Left colon (tissue), 2 donors: ENCODE measurements at regions of chr12 and their contacts with region 1.

Region 1: GRCh38 chr12:96578526-96579125 is 89.2 kb downstream of the CFAP54 start:
- DNase-seq: no peak
- ATAC-seq: peak; percentile 56

Region 2: DNA sequence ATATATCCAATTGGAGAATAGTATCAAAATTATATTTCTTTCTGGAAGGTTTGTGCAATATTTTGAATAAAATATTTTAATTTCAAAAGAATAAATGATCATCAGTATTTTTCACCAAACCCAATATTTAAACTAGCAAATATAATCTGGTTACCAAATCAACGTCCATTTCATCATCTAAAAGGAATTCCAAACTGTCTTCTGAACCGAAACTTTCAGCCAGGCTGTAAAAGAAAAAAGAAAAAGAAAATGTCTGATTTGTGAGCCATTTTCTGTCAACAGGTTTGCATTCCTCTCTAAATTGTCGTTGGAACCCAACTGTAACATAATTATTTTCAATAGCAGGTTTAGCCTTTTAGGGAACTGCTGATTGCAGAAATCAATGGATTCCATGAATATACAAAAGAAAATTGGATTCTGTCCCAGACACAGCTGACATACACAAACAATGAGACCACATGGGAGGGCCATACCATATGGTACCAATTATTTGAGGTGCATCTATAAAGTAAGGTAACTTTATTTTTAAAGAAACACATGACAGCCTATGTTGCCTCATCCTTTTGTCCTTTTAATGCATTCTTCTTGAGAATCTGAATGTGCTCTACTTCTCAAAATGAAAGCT is 697.2 kb before region 1 on chr12:
- intact Hi-C with region 1: no loop called
- DNase-seq: no peak
- ATAC-seq: no peak

Region 3: GRCh38 chr12:96078231-96079135 is 500.1 kb before region 1 on chr12:
- intact Hi-C with region 1: no loop called
- DNase-seq: no peak
- ATAC-seq: no peak

Region 4: DNA sequence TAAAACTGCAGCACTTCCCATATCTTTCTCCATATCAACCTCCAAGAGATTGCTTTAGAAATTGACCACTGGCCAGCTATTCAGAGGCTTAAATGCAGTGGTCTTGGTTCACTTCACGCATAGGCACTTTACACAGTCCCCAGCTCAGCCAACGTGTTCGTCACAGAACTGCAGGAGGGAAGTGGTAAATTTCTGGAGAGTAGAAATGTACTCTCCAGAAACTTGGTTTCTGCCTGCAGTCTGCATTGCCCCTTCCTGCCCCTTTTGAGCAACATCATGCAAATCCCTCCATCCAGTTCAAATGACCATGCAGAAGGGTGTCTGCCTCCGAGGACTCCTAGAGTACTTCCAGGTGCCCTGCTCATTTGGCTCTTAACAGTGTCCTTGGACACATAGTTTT is 285.7 kb after region 1 on chr12:
- intact Hi-C with region 1: no loop called
- DNase-seq: no peak
- ATAC-seq: no peak

Region 5: GRCh38 chr12:96902076-96902475 is 323.4 kb after region 1 on chr12:
- intact Hi-C with region 1: no loop called
- DNase-seq: no peak
- ATAC-seq: no peak

Region 6: GRCh38 chr12:96985480-96986362 is 407.1 kb after region 1 on chr12:
- intact Hi-C with region 1: loop called in 1 of 2 experiments (anchors 10 kb)
- DNase-seq: peak in 1 of 2 donors; percentile 15
- ATAC-seq: peak; percentile 76

Region 7: DNA sequence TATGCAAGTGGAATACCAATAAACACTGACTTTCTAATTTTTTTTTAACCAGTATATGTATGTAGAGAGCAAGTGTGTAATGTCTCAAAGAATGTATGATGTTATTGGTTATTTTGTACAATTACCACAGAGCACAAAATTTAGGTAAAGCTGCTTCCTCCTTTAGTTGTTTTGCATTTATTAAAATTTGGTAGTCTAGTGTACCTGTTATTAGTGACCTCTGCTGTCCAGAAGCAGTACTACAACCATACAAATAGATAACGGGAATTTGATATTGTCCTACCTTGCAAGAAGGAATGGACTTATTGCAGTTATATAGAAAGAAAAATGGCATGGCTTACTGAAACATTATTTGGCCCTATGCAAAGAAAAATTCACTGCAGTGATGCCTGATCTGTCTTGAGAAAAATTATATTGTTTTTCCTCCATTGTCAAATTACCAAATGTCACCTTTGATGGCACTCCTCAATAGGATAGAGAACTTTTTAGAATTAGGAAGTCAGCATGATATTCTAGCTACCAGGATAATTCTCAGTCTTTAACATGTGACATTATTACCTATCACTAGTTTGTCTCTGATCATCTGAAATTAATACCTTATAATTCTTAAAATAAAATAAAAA is 730.1 kb after region 1 on chr12:
- intact Hi-C with region 1: loop called in 1 of 2 experiments (anchors 5 kb)
- DNase-seq: no peak
- ATAC-seq: no peak

Region 8: GRCh38 chr12:98397316-98398105 is 1818.9 kb after region 1 on chr12:
- intact Hi-C with region 1: loop called in 1 of 2 experiments (anchors 10 kb)
- DNase-seq: peak; percentile 67 to 88
- ATAC-seq: peak; percentile 98